CD8-positive, alpha-beta T cell (primary cell): ENCODE measurements at regions of chr4 and their contacts with region 1.

Region 1: DNA sequence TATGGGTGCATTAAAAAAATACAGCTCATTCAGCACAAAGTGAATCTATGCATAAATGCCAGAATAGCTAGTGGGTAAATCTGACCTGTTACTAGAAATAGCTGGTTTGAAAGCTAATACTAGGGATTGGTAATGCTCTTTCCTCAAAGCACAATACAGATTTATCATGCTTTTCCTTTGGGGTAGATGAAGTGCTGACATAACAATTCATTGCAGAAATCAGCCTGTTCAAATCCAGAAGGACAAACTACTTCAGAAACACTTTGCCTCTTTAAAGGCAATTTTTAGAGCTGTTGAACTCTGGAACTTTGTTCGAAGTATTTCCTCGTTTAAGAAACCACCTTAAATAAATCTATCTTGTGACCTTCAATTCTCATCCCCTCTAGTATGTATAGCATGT is 957.9 kb downstream of the ARAP2 start:
- DNase-seq: no peak
- ATAC-seq: no peak
- H3K4me3 ChIP-seq: no peak overlapping the region
- H3K4me3 Mint-ChIP-seq: no peak overlapping the region
- H3K27ac ChIP-seq: no peak overlapping the region
- H3K27ac Mint-ChIP-seq: no peak overlapping the region
- H3K4me1 ChIP-seq: no peaks in the 10 kb centered on the region
- H3K4me1 Mint-ChIP-seq: no peaks in the 10 kb centered on the region
- H3K27me3 ChIP-seq: no peaks in the 10 kb centered on the region
- H3K27me3 Mint-ChIP-seq: no peaks in the 10 kb centered on the region
- CTCF ChIP-seq: no peak

Region 2: DNA sequence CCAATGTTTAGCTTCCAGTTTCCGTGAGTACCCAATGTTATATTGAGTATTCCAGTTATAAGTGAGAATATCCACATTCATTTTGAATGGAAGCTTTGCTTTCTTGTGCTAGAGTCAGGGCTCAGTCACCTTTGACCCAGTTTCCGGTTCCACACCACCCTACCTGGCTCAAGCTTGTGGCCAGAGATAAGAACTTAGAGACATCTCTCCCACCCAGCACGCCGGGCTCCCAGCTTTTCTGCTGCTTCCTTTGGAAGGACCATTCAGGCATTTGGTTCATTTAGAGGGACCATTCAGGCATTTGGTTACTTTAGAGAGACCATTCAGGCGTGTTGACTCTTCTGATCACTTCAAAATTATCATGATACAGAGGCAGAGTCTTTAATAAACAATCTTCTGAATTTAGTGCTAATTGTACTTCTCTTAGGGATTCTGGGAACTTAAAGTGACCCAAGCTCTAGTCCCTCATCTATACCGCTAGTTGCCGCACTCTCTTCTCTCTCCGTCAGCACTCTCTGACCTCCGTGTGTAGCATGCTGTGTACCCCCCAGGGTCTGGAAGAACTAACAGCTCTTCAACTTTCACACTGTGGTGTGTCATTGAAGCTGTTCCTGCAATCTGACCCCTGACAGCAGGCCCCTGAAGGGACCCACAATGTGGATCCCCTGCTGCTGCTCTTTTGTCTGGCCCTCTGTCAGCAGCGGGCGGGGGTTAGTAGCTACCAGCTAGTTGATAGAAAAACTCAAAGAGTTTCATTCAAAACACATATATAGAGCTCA is 14.8 kb after region 1 on chr4:
- CTCF ChIA-PET with region 1: no interaction called
- POLR2A ChIA-PET with region 1: no interaction called
- intact Hi-C with region 1: loop called in 1 of 2 experiments (anchors 1 kb)
- DNase-seq: no peak
- ATAC-seq: no peak
- H3K4me3 ChIP-seq: no peak overlapping the region
- H3K4me3 Mint-ChIP-seq: no peak overlapping the region
- H3K27ac ChIP-seq: no peak overlapping the region
- H3K27ac Mint-ChIP-seq: no peak overlapping the region
- H3K4me1 ChIP-seq: no peaks in the 10 kb centered on the region
- H3K4me1 Mint-ChIP-seq: no peaks in the 10 kb centered on the region
- H3K27me3 ChIP-seq: no peaks in the 10 kb centered on the region
- H3K27me3 Mint-ChIP-seq: no peaks in the 10 kb centered on the region
- CTCF ChIP-seq: no peak

Region 3: GRCh38 chr4:36740786-36741310 is 1454.4 kb after region 1 on chr4:
- CTCF ChIA-PET with region 1: no interaction called
- POLR2A ChIA-PET with region 1: no interaction called
- intact Hi-C with region 1: no loop called
- DNase-seq: no peak
- ATAC-seq: no peak
- H3K4me3 ChIP-seq: no peak overlapping the region
- H3K4me3 Mint-ChIP-seq: no peak overlapping the region
- H3K27ac ChIP-seq: no peak overlapping the region
- H3K27ac Mint-ChIP-seq: no peak overlapping the region
- H3K4me1 ChIP-seq: no peaks in the 10 kb centered on the region
- H3K4me1 Mint-ChIP-seq: no peaks in the 10 kb centered on the region
- H3K27me3 ChIP-seq: no peaks in the 10 kb centered on the region
- H3K27me3 Mint-ChIP-seq: no peaks in the 10 kb centered on the region
- CTCF ChIP-seq: no peak